ENCODE measurements at regions of chr15 and their contacts with region 1.

Region 1: GRCh38 chr15:45429974-45430792 is 51.8 kb upstream of the GATM start:
- DNase-seq: no peak
- ATAC-seq: peak; percentile 98
- H3K4me3 ChIP-seq: peak overlapping the region; percentile 61; the same call in 1 of the 2 replicates
- H3K27ac ChIP-seq: no peak overlapping the region
- H3K4me1 ChIP-seq: 0 out of 2 replicates have a peak, but pooled peaks cover 3% of the 10 kb centered on the region
- H3K27me3 ChIP-seq: no peaks in the 10 kb centered on the region
- CTCF ChIP-seq: peak; percentile 99 to 100 (median 99)
- EP300 ChIP-seq: no peak
- POLR2A ChIP-seq: no peak
- RAD21 ChIP-seq: peak; percentile 79

Region 2: GRCh38 chr15:45414215-45414885 is 15.8 kb before region 1 on chr15:
- CTCF ChIA-PET with region 1: interaction called, 10 read pairs
- POLR2A ChIA-PET with region 1: no interaction called
- RAD21 ChIA-PET with region 1: no interaction called
- SMC1A ChIA-PET with region 1: interaction called, 17 read pairs
- in situ Hi-C with region 1: no loop called
- intact Hi-C with region 1: no loop called
- DNase-seq: no peak
- ATAC-seq: peak; percentile 74
- H3K4me3 ChIP-seq: no peak overlapping the region
- H3K27ac ChIP-seq: no peak overlapping the region
- H3K4me1 ChIP-seq: no peaks in the 10 kb centered on the region
- H3K27me3 ChIP-seq: no peaks in the 10 kb centered on the region
- CTCF ChIP-seq: no peak
- EP300 ChIP-seq: no peak
- POLR2A ChIP-seq: no peak
- RAD21 ChIP-seq: no peak

Region 3: GRCh38 chr15:45442500-45443135 is 12.4 kb after region 1 on chr15:
- CTCF ChIA-PET with region 1: interaction called, 21 read pairs
- POLR2A ChIA-PET with region 1: no interaction called
- RAD21 ChIA-PET with region 1: interaction called, 3 read pairs
- SMC1A ChIA-PET with region 1: interaction called, 7 read pairs
- in situ Hi-C with region 1: no loop called
- intact Hi-C with region 1: no loop called
- DNase-seq: no peak
- ATAC-seq: no peak
- H3K4me3 ChIP-seq: no peak overlapping the region
- H3K27ac ChIP-seq: no peak overlapping the region
- H3K4me1 ChIP-seq: peaks cover 8% of the 10 kb centered on the region; the same call in 1 of the 2 replicates
- H3K27me3 ChIP-seq: no peaks in the 10 kb centered on the region
- CTCF ChIP-seq: no peak
- EP300 ChIP-seq: no peak
- POLR2A ChIP-seq: no peak
- RAD21 ChIP-seq: no peak